PC-3 (cell line): ENCODE measurements at regions of chr14 and their contacts with region 1.

Region 1: GRCh38 chr14:67240978-67241414 is 239 bp upstream of the PALS1 start:
- DNase-seq: peak; percentile 98
- ATAC-seq: peak; percentile 81
- H3K4me3 ChIP-seq: peak overlapping the region; percentile 81
- H3K27ac ChIP-seq: peak overlapping the region; percentile 93
- H3K4me1 ChIP-seq: peaks cover 30% of the 10 kb centered on the region
- H3K27me3 ChIP-seq: no peaks in the 10 kb centered on the region
- CTCF ChIP-seq: no peak

Region 2: DNA sequence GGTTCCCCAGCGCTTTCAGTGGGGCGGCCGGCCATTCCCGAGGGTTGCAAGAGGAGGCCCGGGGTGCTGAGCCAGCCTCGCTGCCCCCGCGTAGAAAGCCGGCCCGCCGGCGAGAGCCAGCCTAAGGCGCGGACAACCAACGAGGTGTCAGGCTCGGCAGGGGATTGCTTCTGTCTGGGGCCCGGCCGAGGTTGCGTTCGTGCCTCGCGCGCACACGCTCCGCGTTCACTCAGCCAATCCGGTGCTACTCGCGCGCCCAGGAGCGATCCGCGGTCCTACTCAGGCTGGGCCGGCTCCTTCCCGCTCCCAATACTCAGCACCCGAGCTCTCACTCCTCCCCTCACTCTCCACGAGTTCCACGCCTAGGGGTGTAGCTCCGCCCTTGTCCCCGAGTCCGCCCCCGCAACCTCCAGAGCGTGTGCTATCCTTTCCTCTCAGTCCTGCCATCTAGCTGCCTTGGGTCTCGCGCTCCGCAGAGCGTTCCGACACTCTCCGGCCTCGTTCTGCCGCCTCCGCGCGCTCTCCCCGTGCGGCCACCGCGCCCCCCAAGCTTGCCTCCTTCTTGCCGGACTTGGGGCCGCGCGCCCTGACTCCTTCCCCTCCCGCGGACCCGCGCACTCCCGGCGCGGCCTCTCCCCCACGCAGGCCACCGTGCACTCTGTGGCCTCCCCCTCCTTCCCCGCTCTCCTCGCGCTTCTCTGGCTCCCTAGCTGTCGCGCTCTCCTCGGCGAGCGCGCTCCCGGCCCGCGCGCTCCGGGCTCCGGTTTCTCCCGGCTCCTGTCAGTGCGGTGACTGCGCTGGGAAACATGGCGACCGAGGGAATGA is 733.1 kb before region 1 on chr14 and contains the start of gene GPHN:
- CTCF ChIA-PET with region 1: no interaction called
- POLR2A ChIA-PET with region 1: no interaction called
- intact Hi-C with region 1: loop called (anchors 2 kb)
- DNase-seq: peak; percentile 98
- ATAC-seq: peak; percentile 95
- H3K4me3 ChIP-seq: peak within 1 kb of the TSS; percentile 95
- H3K27ac ChIP-seq: peak within 1 kb of the TSS; percentile 78
- H3K4me1 ChIP-seq: peaks cover 22% of the 10 kb centered on the region
- H3K27me3 ChIP-seq: no peaks in the 10 kb centered on the region
- CTCF ChIP-seq: no peak; the same call in 1 of the 2 replicates
- total RNA-seq, gene GPHN: 23.4 and 39.5 TPM in 2 replicates

Region 3: DNA sequence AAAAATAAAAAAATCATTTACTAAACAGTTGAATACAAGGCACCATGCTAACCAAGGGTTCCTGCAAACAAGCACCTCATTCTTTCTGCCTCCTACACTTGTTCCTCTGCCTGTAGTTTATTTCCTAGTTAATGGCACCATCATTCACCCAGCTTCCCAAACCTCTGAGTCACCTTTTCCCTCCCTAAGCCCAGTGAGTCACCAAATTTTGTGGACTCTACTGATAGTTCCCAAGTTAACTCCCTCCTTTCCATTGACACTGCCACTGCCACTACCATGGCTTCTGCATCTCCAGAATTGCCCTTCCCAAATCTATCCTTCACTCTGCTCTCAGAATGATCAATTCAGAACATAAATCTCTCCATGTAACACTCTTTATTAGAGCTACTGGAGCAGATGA is 53.8 kb before region 1 on chr14:
- CTCF ChIA-PET with region 1: no interaction called
- POLR2A ChIA-PET with region 1: interaction called, 26 read pairs
- intact Hi-C with region 1: loop called (anchors 1 kb)
- DNase-seq: peak; percentile 97
- ATAC-seq: peak; percentile 85
- H3K4me3 ChIP-seq: peak overlapping the region; percentile 52
- H3K27ac ChIP-seq: peak overlapping the region; percentile 87
- H3K4me1 ChIP-seq: peaks cover 35% of the 10 kb centered on the region
- H3K27me3 ChIP-seq: no peaks in the 10 kb centered on the region
- CTCF ChIP-seq: no peak

Region 4: GRCh38 chr14:67228325-67228984 is 12.5 kb before region 1 on chr14:
- CTCF ChIA-PET with region 1: no interaction called
- POLR2A ChIA-PET with region 1: no interaction called
- intact Hi-C with region 1: loop called (anchors 1 kb)
- DNase-seq: peak; percentile 67
- ATAC-seq: peak; percentile 92
- H3K4me3 ChIP-seq: peak overlapping the region; percentile 54
- H3K27ac ChIP-seq: peak overlapping the region; percentile 26
- H3K4me1 ChIP-seq: peaks cover 8% of the 10 kb centered on the region
- H3K27me3 ChIP-seq: no peaks in the 10 kb centered on the region
- CTCF ChIP-seq: no peak

Region 5: DNA sequence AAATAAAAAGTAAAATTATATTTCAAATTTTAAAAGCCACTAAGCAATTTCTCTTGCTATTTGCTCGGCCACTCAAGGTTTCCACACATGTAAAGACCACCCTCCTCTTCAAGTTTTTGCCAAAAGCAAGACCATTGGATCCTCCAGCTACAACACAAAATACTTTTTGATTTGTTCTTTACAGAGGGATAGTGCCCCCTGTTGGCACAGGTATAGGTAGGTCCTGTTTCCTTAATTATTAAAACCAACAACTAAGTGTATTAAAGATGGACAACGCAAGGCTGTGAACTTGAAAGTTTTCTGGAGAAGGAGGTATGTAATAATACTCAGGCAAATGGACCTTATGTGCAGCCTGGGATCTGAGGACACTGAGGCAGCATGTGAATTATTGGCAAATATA is 94.8 kb after region 1 on chr14:
- CTCF ChIA-PET with region 1: interaction called, 4 read pairs
- POLR2A ChIA-PET with region 1: no interaction called
- intact Hi-C with region 1: loop called (anchors 5 kb)
- DNase-seq: peak; percentile 60
- ATAC-seq: 0 out of 2 replicates have a peak, but pooled peaks have one; percentile 14
- H3K4me3 ChIP-seq: no peak overlapping the region
- H3K27ac ChIP-seq: no peak overlapping the region
- H3K4me1 ChIP-seq: peaks cover 17% of the 10 kb centered on the region
- H3K27me3 ChIP-seq: no peaks in the 10 kb centered on the region
- CTCF ChIP-seq: peak; percentile 90